ENCODE measurements at regions of chr3 and their contacts with region 1.

Region 1: GRCh38 chr3:153043729-153044328 is 118.2 kb upstream of the RAP2B start:
- DNase-seq: no peak
- H3K4me3 ChIP-seq: peak overlapping the region in 1 of 4 donors; percentile 37
- H3K27ac ChIP-seq: no peak overlapping the region
- H3K4me1 ChIP-seq: peaks cover 0 to 11% (median 8%) of the 10 kb centered on the region in 4 donors
- H3K27me3 ChIP-seq: no peaks in the 10 kb centered on the region
- CTCF ChIP-seq: no peak
- EP300 ChIP-seq: no peak
- POLR2A ChIP-seq: no peak

Region 2: GRCh38 chr3:153087595-153088566 is 44.1 kb after region 1 on chr3:
- intact Hi-C with region 1: no loop called
- DNase-seq: no peak
- H3K4me3 ChIP-seq: no peak overlapping the region
- H3K27ac ChIP-seq: no peak overlapping the region
- H3K4me1 ChIP-seq: no peaks in the 10 kb centered on the region
- H3K27me3 ChIP-seq: no peaks in the 10 kb centered on the region
- CTCF ChIP-seq: no peak
- EP300 ChIP-seq: no peak
- POLR2A ChIP-seq: no peak

Region 3: DNA sequence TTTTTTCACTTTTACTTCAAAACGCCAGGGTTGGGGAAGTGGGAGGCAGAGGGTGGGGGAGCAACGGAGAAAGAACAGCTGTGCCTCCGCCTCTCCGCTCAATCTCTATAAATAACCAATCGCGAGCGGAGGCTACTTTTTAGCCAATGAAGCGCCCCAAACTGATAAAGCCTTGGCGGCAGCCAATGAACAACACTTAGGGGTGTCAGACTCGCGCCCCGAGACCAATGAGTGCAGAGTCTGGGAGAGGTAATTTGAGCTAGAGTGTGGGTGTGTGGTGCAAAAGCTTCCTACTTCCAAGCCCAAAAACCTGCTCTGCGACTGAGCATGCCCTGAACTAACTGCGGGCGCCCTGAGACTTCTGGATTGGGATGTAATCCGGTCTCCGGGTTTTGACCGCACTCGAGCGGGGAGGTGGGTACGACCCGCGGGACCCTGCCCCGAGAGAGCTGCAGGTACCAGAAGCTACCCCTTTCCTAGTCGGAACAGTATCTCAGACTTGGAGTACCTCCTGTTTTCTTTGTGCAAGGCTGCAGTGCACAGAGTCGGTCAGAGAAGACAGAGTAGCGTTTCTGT is 117.4 kb after region 1 on chr3:
- intact Hi-C with region 1: loop called (anchors 2 kb)
- DNase-seq: peak; percentile 98
- H3K4me3 ChIP-seq: peak overlapping the region; percentile 70 to 96 (median 89)
- H3K27ac ChIP-seq: peak overlapping the region; percentile 87 to 98 (median 92)
- H3K4me1 ChIP-seq: peaks cover 19 to 37% (median 32%) of the 10 kb centered on the region in 4 donors
- H3K27me3 ChIP-seq: no peaks in the 10 kb centered on the region
- CTCF ChIP-seq: no peak
- EP300 ChIP-seq: no peak
- POLR2A ChIP-seq: peak; percentile 45

Region 4: DNA sequence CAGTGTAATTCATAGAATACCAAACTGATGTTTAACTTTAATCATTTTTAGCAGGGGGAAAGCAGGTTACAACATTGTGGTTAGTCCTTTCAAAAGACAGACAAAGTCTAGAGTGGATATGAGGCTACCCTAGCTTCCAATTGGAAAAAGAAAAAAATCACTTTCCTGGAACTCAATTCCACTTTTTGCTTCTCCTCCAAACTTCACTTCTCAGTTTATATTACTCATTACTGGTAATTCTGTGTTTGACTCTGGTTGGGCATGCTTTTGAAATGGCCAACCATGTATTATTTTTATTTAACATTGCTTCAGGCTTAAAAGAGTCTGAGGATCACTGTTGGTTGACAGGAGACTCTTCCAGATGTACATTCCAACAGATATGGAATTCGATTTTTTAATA is 203.0 kb after region 1 on chr3:
- intact Hi-C with region 1: no loop called
- DNase-seq: no peak
- H3K4me3 ChIP-seq: no peak overlapping the region
- H3K27ac ChIP-seq: peak overlapping the region; percentile 30 to 69 (median 55)
- H3K4me1 ChIP-seq: peaks cover 0 to 17% (median 13%) of the 10 kb centered on the region in 4 donors
- H3K27me3 ChIP-seq: no peaks in the 10 kb centered on the region
- CTCF ChIP-seq: no peak
- EP300 ChIP-seq: no peak
- POLR2A ChIP-seq: no peak

Region 5: DNA sequence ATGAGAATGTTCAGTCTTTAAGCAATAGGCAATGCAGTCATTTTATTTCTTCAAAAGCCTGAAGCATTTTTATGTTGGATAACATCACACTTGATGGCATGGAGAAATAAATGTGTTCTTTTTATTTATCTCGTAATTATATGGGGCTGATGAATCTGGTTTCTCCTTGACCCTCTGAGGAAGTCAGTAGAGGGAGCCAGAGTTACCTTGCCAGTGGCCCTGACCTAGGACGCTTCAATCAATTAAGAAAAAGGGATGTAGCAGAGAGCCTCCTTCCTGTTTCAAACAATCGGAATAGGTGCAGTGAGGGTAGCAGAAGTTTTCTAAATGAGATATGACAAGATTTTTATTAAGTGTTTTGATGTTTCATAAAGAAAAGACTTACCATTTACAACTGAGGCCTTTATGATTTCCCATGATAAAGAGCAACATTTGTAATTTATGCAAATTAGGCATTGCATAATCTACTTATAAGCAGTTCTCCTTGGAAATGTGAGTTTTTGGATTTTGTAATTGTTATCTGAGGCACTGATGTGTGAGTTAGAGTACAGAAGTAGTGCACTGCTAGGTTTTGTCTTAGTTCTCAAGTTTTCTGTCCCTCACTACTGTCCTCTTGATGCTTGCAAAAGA is 247.3 kb after region 1 on chr3:
- intact Hi-C with region 1: loop called (anchors 5 kb)
- DNase-seq: no peak
- H3K4me3 ChIP-seq: no peak overlapping the region
- H3K27ac ChIP-seq: peak overlapping the region in 1 of 4 donors; percentile 27
- H3K4me1 ChIP-seq: peaks cover 0 to 41% (median 24%) of the 10 kb centered on the region in 4 donors
- H3K27me3 ChIP-seq: no peaks in the 10 kb centered on the region
- CTCF ChIP-seq: peak; percentile 33 to 52 (median 42)
- EP300 ChIP-seq: no peak
- POLR2A ChIP-seq: no peak

Region 6: GRCh38 chr3:153595186-153595815 is 551.5 kb after region 1 on chr3:
- intact Hi-C with region 1: loop called (anchors 5 kb)
- DNase-seq: no peak
- H3K4me3 ChIP-seq: no peak overlapping the region
- H3K27ac ChIP-seq: no peak overlapping the region
- H3K4me1 ChIP-seq: peaks cover 0 to 5% (median 2%) of the 10 kb centered on the region in 4 donors
- H3K27me3 ChIP-seq: no peaks in the 10 kb centered on the region
- CTCF ChIP-seq: peak; percentile 58 to 67 (median 58)
- EP300 ChIP-seq: no peak
- POLR2A ChIP-seq: no peak